ENCODE measurements at regions of chr1 and their contacts with region 1.

Region 1: GRCh38 chr1:21294266-21294989 is 4.2 kb upstream of the ECE1 start:
- DNase-seq: peak; percentile 95
- H3K4me3 Mint-ChIP-seq: peak overlapping the region; percentile 75
- H3K27ac Mint-ChIP-seq: peak overlapping the region; percentile 99
- H3K4me1 Mint-ChIP-seq: peaks cover 82% of the 10 kb centered on the region
- H3K27me3 Mint-ChIP-seq: no peaks in the 10 kb centered on the region

Region 2: GRCh38 chr1:20786253-20787028 is 508.0 kb before region 1 on chr1:
- CTCF ChIA-PET with region 1: no interaction called
- POLR2A ChIA-PET with region 1: interaction called, 6 read pairs
- intact Hi-C with region 1: loop called (anchors 2 kb)
- DNase-seq: peak; percentile 97
- H3K4me3 Mint-ChIP-seq: peak overlapping the region; percentile 92
- H3K27ac Mint-ChIP-seq: peak overlapping the region; percentile 93
- H3K4me1 Mint-ChIP-seq: peaks cover 27% of the 10 kb centered on the region
- H3K27me3 Mint-ChIP-seq: peaks cover 3% of the 10 kb centered on the region

Region 3: DNA sequence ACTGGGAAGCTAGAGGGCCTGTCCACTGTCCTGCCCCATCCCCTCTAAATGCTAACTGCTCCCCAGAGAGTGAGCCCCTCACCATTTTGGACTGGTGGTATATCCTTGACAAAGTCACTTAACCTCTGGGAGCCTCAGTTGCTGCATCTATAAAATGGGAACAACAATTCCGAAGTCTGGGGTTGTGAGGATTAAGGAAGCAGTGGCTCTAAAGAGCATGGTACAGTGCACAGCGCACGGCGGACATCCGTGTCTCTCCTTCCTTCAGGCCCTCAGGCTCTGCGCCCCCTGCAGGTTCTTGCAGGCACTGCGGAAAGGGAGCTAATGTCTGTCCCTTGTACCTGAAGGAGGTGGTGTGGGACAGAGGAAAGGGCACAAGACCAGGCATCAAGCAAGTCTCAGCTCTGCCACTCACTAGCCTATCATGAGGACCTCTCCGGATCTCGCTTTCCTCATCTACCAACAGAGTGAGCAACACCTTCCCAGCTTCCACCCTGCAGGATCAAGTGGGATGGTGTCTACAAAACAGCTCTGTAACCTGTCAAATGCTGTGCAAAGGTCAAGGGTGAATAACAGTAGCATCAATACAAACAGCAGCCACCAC is 24.2 kb before region 1 on chr1:
- CTCF ChIA-PET with region 1: interaction called, 261 read pairs
- POLR2A ChIA-PET with region 1: interaction called, 14 read pairs
- intact Hi-C with region 1: loop called (anchors 1 kb)
- DNase-seq: peak; percentile 90
- H3K4me3 Mint-ChIP-seq: no peak overlapping the region
- H3K27ac Mint-ChIP-seq: no peak overlapping the region
- H3K4me1 Mint-ChIP-seq: peaks cover 23% of the 10 kb centered on the region
- H3K27me3 Mint-ChIP-seq: no peaks in the 10 kb centered on the region

Region 4: GRCh38 chr1:21334214-21335087 is 40.0 kb after region 1 on chr1:
- CTCF ChIA-PET with region 1: interaction called, 27 read pairs
- POLR2A ChIA-PET with region 1: interaction called, 46 read pairs
- intact Hi-C with region 1: loop called (anchors 1 kb)
- DNase-seq: peak; percentile 89
- H3K4me3 Mint-ChIP-seq: peak overlapping the region; percentile 83
- H3K27ac Mint-ChIP-seq: peak overlapping the region; percentile 98
- H3K4me1 Mint-ChIP-seq: peaks cover 88% of the 10 kb centered on the region
- H3K27me3 Mint-ChIP-seq: no peaks in the 10 kb centered on the region

Region 5: GRCh38 chr1:21414015-21414414 is 119.6 kb after region 1 on chr1:
- CTCF ChIA-PET with region 1: no interaction called
- POLR2A ChIA-PET with region 1: no interaction called
- intact Hi-C with region 1: no loop called
- DNase-seq: no peak
- H3K4me3 Mint-ChIP-seq: no peak overlapping the region
- H3K27ac Mint-ChIP-seq: no peak overlapping the region
- H3K4me1 Mint-ChIP-seq: no peaks in the 10 kb centered on the region
- H3K27me3 Mint-ChIP-seq: peaks cover 4% of the 10 kb centered on the region

Region 6: DNA sequence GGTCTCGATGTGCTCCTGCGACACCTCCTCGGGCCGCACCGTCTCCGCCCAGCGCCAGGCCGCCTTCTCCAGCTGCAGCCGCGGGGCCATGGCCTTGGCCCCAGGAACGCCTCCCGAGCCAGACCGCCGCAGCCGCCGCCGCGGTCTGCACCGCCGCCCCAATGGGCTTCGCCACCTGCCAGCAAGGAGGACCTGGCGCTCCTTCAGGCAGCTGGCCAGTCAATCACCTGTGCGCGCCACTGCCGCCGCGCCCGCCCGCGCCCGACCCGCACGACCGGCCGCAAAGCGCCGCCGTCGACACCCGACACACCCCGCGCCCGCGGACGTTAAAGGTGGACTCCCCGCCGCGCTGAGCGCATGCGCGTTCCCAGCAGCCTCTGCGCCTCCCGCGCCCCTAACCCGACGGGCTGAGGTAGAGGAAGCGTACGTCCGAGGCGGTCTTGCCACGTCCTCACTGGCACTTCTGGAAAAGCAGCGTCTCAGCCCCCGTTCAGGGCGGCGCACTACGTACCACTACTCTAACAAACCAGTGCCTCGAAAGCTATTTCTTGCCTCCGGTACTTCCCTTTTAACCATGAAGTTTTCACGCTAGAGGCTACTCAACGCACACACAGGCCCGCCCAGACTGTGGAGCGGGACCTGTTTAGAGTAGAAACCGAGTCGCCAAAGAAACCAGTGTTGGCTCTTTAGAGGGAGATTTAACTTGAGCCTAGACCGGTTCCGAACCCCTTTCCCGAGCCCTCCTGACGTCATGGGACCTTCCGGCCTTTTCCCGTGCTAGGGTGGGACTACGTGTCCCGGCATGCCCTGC is 488.6 kb after region 1 on chr1 and contains the start of gene USP48:
- CTCF ChIA-PET with region 1: no interaction called
- POLR2A ChIA-PET with region 1: interaction called, 4 read pairs
- intact Hi-C with region 1: loop called (anchors 1 kb)
- DNase-seq: peak; percentile 98
- H3K4me3 Mint-ChIP-seq: peak within 1 kb of the TSS; percentile 94
- H3K27ac Mint-ChIP-seq: peak within 1 kb of the TSS; percentile 97
- H3K4me1 Mint-ChIP-seq: peaks cover 21% of the 10 kb centered on the region
- H3K27me3 Mint-ChIP-seq: no peaks in the 10 kb centered on the region
- total RNA-seq, gene USP48: 77.2 to 91.1 TPM